Left colon (tissue), 2 donors: ENCODE measurements at regions of chr11 and their contacts with region 1.

Region 1: GRCh38 chr11:133134314-133135173 is 397.8 kb downstream of the OPCML start:
- DNase-seq: peak; percentile 33 to 46
- ATAC-seq: peak; percentile 62

Region 2: DNA sequence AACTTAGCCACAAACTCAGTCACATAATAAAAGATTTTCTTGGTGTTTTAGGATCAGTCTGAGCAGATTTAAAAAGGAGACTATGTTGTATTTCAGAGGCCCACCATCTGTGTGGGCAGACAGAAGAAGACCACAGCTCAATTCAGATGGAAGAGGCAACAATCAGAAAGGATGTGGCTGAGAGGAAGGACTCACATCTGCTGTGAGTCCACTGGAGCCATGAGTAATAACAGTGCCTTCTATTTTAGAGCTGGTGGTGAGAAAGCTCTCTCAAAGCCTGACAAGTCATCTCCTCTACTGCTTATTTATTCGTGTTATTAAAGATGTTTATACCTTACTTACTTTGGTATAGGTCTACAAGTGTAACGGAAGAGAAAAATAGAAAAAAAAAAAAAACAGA is 40.6 kb after region 1 on chr11:
- intact Hi-C with region 1: no loop called
- DNase-seq: no peak
- ATAC-seq: no peak

Region 3: DNA sequence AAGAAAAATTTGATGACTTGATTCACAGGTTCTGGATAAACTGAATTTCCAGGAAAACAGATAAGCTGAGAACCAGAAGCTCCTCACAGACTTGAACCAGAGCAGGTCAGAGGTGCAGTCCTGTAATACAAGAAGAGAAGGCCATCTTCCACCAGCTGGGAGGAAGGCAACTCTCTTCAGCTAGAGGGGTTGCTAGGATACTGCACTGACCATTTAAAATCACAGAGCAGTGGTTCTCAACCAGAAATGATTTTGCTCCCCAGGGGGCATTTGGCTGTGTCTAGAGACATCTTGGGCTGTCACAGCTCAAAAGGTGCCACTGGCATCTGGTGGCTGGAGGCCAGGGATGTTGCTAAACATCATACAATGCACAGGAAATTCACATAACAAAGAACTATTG is 380.5 kb after region 1 on chr11:
- intact Hi-C with region 1: no loop called
- DNase-seq: no peak
- ATAC-seq: no peak

Region 4: DNA sequence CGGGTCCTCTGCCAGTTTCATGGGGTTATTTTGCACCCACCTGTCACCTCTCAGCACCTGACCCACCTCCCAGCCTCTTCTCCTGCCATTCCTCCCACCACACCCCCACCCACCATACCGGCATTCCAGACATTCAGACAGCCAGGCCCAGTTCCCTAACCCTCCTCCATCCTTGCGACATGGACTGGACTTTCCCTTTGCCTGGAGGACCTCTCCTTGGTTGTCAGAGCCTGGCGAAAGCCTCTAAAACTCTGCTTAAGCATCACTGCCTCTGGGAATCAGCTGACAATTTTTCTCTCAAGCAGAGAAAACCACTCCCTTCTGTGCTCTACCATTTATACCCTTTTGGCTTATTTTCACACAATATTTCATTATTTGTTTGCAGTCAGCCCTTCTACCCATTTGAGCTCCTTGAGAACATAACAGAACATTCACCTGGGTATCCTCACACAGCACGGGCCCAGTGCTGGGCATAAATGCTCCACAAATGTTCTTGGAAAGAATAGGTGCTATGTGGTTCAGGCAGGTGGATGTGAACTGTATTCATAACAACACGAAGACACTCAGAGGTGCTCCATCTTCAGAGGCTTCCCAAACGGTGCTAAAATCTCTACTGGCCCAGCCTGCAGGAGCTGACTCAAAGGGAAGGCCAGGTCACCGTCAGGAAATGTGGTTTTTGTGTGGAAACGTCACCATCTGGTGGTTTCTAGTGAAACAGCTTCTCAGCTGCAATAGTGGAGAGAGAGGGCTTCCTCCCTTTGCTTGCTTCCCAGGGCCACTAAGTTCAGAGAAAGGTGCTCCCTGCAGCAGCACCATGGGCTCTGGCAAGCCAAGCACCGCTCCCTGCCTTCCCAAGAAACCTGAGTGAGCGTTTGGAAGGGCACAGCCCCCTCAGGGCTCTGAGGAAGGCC is 700.4 kb after region 1 on chr11:
- intact Hi-C with region 1: loop called in 1 of 2 experiments (anchors 2 kb)
- DNase-seq: no peak
- ATAC-seq: peak; percentile 55